PC-3 (cell line): ENCODE measurements at regions of chr19 and their contacts with region 1.

Region 1: GRCh38 chr19:38831142-38831605 is 420 bp downstream of the ECH1 start:
- DNase-seq: peak; percentile 91
- ATAC-seq: peak; percentile 68
- H3K4me3 ChIP-seq: peak overlapping the region; percentile 72
- H3K27ac ChIP-seq: peak overlapping the region; percentile 99
- H3K4me1 ChIP-seq: peaks cover 41% of the 10 kb centered on the region
- H3K27me3 ChIP-seq: no peaks in the 10 kb centered on the region
- CTCF ChIP-seq: no peak

Region 2: DNA sequence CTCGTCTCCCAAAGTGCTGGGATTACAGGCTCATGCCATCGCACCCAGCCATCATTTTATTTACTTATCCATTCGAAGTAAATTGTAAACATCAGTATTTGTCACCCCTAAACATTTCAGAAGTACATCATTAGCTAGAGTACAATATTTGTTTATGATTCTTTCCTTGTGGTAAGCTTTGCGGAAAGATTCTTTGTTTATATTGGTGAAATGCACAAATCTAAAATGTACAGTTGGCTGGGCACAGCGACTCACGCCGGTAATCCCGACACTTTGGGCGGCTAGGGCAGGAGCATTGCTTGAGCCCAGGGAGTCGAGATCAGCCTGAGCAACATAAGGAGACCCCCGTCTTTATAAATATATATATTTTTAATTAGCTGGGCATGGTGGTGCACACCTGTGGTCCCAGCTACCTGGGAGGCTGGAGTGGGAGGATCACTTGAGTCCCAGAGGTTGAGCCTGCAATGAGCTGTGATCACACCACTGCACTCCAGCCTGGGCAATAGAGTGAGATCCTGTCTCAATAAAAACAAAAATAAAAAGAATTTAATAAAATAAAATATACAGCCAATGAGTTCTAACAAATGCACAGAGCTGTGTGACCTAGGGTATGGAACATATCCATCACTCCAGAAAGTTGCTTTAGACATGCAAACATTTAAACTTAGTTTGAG is 32.0 kb before region 1 on chr19:
- CTCF ChIA-PET with region 1: no interaction called
- POLR2A ChIA-PET with region 1: interaction called, 3 read pairs
- intact Hi-C with region 1: loop called (anchors 5 kb)
- DNase-seq: peak; percentile 7
- ATAC-seq: peak; percentile 16
- H3K4me3 ChIP-seq: no peak overlapping the region
- H3K27ac ChIP-seq: peak overlapping the region; percentile 82
- H3K4me1 ChIP-seq: peaks cover 8% of the 10 kb centered on the region
- H3K27me3 ChIP-seq: no peaks in the 10 kb centered on the region
- CTCF ChIP-seq: no peak

Region 3: GRCh38 chr19:38862321-38863059 is 31.3 kb after region 1 on chr19:
- CTCF ChIA-PET with region 1: no interaction called
- POLR2A ChIA-PET with region 1: interaction called, 19 read pairs
- intact Hi-C with region 1: no loop called
- DNase-seq: peak; percentile 64
- ATAC-seq: peak; percentile 66
- H3K4me3 ChIP-seq: no peak overlapping the region
- H3K27ac ChIP-seq: no peak overlapping the region
- H3K4me1 ChIP-seq: peaks cover 18% of the 10 kb centered on the region
- H3K27me3 ChIP-seq: no peaks in the 10 kb centered on the region
- CTCF ChIP-seq: no peak

Region 4: GRCh38 chr19:39125554-39126311 is 294.6 kb after region 1 on chr19 and contains the start of gene PAK4:
- CTCF ChIA-PET with region 1: no interaction called
- POLR2A ChIA-PET with region 1: no interaction called
- intact Hi-C with region 1: no loop called
- DNase-seq: peak; percentile 96
- ATAC-seq: peak; percentile 93
- H3K4me3 ChIP-seq: peak within 1 kb of the TSS; percentile 96
- H3K27ac ChIP-seq: peak within 1 kb of the TSS; percentile 68
- H3K4me1 ChIP-seq: peaks cover 7% of the 10 kb centered on the region; the same call in 1 of the 2 replicates
- H3K27me3 ChIP-seq: no peaks in the 10 kb centered on the region
- CTCF ChIP-seq: no peak
- total RNA-seq, gene PAK4: 13.5 and 16.2 TPM in 2 replicates